Heart right ventricle (tissue), 16 donors: ENCODE measurements at regions of chr9 and their contacts with region 1.

Region 1: DNA sequence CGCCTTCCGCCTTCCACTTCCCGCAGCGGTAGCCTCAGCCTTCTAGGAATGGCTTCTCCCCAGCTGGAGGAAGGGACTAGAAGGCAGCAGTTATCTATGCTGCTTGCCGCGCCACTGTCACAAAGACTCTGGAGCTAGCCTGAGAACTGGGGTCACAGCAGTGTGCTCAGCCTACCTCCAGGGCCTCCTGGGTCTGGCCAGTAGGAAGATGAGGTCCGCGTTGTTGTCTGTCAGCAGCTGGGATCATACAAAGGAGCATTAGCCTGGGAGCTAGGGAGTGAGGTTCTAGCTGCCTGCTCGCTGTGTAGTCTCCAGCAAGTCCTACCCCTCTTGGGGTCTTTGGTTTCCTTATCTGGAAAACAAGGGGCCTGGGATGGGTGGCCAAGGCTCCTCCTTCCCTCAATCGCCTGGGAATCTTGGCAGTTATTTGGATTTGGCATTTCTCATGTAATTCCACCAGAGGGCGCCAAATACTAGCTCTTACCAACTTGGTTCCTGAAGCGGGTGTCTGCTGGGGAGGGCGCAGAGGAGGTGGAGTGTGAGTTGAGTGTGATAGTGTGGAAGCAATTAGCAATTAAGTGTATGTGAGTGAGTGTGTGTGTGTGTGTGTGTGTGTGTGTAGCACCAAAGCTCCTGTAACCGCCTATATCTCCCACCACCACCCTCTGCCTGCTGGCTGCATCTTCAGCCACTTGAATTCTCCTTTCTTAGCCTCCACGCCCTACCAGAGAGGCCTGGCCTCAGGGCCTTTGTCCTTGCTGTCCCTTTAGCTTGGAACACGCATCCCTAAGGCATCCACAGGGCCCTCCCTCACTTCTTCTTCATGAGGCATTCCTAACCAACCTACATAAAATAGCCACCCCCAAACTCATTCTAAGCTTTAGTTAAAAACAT is 97.1 kb downstream of the ENTREP1 start:
- DNase-seq: peak in 1 of 2 donors; percentile 67
- ATAC-seq: peak; percentile 63 to 84 (median 76)
- H3K4me3 ChIP-seq: no peak overlapping the region
- H3K27ac ChIP-seq: no peak overlapping the region
- H3K4me1 ChIP-seq: peaks cover 0 to 3% (median 0%) of the 10 kb centered on the region in 9 donors
- H3K27me3 ChIP-seq: peaks cover 0 to 7% (median 0%) of the 10 kb centered on the region in 7 donors
- CTCF ChIP-seq: peak; percentile 67 to 88 (median 80)

Region 2: DNA sequence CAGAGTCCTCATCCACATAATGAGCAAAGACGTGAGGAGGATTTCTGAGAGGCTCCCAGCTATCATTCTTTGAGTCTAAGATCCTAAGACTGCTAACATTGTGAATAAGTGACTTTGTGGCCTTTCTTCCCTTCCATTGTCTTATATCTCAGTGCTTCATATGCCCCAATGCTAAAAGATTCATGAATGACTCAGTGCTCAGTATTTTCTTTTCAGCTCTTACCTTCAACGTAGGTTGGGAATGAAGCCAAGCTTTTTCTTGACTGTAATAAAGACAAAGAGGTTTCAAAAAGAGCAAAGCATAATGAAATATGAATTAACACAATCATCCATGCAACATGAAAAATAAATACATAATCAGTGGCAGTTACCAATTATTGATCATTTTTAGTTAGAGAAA is 49.3 kb after region 1 on chr9:
- intact Hi-C with region 1: no loop called
- DNase-seq: no peak
- ATAC-seq: no peak
- H3K4me3 ChIP-seq: no peak overlapping the region
- H3K27ac ChIP-seq: no peak overlapping the region
- H3K4me1 ChIP-seq: peaks cover 0 to 9% (median 0%) of the 10 kb centered on the region in 9 donors
- H3K27me3 ChIP-seq: no peaks in the 10 kb centered on the region
- CTCF ChIP-seq: no peak

Region 3: DNA sequence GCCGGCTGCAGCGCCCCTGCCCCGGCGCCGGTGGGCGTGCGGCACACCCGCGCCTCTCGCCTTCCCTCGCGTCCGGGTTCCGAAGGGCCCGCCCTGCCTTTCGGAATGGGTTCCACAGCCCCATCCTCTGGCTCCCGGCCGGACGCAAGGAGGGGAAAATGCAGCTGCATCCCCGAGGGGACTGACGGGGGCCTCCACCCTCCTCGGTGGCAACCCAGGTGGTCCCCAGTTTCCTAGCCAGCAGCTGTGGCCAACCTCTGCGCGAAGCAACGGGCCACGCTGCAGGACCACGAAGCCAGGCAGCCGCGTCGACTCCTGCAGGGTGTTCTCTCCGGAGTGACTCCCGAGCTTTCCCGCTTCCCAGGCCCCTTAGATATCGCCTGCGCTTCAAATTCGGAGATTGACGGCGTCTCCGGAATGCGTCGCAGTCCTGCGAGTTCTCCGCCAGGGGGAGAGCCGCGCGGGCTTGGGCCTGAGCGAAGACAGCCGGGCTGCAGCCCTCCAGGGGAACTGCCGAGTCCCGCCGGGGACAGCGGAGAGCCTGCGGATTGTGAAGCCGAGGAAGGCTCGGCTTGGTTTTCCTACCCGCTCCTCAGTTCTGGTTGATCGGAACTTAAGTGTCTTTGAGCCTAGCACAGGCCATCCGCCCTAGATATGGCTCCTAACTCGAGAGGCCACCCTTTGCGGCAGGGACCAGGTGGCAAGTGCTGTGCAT is 250.6 kb after region 1 on chr9:
- intact Hi-C with region 1: loop called in 4 of 10 experiments (anchors 5 to 10 kb)
- DNase-seq: peak; percentile 81 to 87
- ATAC-seq: peak; percentile 87 to 95 (median 93)
- H3K4me3 ChIP-seq: peak overlapping the region; percentile 48 to 89 (median 80)
- H3K27ac ChIP-seq: peak overlapping the region; percentile 7 to 91 (median 78)
- H3K4me1 ChIP-seq: peaks cover 5 to 30% (median 14%) of the 10 kb centered on the region in 9 donors
- H3K27me3 ChIP-seq: peaks cover 0 to 16% (median 0%) of the 10 kb centered on the region in 7 donors
- CTCF ChIP-seq: peak; percentile 72 to 95 (median 90)

Region 4: DNA sequence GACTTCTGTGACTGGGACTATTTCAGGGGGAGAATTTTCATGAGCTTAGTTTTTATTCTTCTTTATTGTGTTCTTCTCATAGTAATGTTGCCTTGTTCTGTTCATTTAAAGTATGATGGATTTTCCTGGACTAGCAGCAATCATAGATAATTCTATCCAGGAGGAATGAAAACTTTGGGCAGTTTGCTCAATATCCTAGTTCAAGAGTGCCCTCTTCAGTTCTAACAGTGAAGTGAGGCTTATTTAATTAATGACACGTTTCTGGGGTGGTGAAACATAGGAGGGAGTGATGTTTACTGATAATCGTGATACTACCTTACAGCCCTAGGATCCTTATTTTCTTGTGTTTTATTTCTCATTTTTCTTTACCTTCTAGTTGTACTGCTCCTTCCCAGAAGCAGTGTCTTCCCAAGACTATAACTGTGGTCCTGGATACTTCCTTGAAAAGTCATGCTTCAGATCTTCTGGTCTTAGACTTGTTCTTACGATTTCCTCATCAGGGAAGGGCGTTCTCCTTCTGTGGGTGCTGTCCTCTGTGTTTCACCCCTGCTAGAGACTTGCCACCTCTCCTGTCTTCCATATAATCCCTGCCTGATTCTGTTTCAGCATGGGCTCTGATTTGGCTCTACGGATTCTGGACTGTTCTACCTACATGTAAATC is 455.8 kb after region 1 on chr9:
- intact Hi-C with region 1: loop called in 9 of 10 experiments (anchors 2 to 10 kb)
- DNase-seq: no peak
- ATAC-seq: peak in 6 of 8 donors; percentile 38 to 74 (median 54)
- H3K4me3 ChIP-seq: no peak overlapping the region
- H3K27ac ChIP-seq: no peak overlapping the region
- H3K4me1 ChIP-seq: peaks cover 0 to 19% (median 5%) of the 10 kb centered on the region in 9 donors
- H3K27me3 ChIP-seq: no peaks in the 10 kb centered on the region
- CTCF ChIP-seq: peak; percentile 13 to 70 (median 59)

Region 5: GRCh38 chr9:69932901-69933300 is 510.7 kb after region 1 on chr9:
- intact Hi-C with region 1: loop called in 2 of 10 experiments (anchors 10 kb)
- DNase-seq: no peak
- ATAC-seq: no peak
- H3K4me3 ChIP-seq: no peak overlapping the region
- H3K27ac ChIP-seq: no peak overlapping the region
- H3K4me1 ChIP-seq: peaks cover 0 to 11% (median 0%) of the 10 kb centered on the region in 9 donors
- H3K27me3 ChIP-seq: peaks cover 0 to under 1% (median 0%) of the 10 kb centered on the region in 7 donors
- CTCF ChIP-seq: peak in 1 of 9 donors; percentile 10